Right ventricle myocardium superior (tissue), 1 donor: ENCODE measurements at regions of chr17 and their contacts with region 1.

Region 1: GRCh38 chr17:58463821-58464220 is 24.4 kb downstream of the HSF5 start:
- DNase-seq: no peak
- ATAC-seq: no peak

Region 2: DNA sequence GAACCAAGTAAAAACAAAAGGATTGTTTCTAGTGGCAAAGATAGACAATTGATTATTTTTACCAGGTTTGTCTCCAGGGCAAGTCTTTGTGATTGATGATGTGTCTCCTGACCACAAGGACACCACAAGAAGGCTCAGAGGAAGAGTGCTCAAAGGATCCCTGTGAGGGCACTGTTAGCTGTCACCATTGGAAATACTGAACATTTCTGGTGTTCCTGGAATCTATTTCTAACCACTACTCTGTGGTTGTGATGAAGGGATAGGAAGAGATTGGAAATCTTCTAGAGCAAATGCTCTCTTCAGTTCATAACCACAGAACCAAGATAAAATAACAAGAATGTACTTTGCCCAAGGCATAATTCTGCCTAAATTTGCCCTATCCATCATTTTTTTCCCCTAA is 61.8 kb before region 1 on chr17:
- intact Hi-C with region 1: loop called (anchors 10 kb)
- DNase-seq: no peak
- ATAC-seq: no peak